ENCODE measurements at regions of chr10 and their contacts with region 1.

Region 1: GRCh38 chr10:87942884-87943527 is 79.6 kb downstream of the PTEN start:
- DNase-seq: no peak
- H3K4me3 ChIP-seq: no peak overlapping the region
- H3K27ac ChIP-seq: no peak overlapping the region
- H3K4me1 ChIP-seq: no peaks in the 10 kb centered on the region
- CTCF ChIP-seq: no peak

Region 2: GRCh38 chr10:87925570-87925969 is 17.4 kb before region 1 on chr10:
- CTCF ChIA-PET with region 1: interaction called, 3 read pairs
- POLR2A ChIA-PET with region 1: interaction called, 30 read pairs
- intact Hi-C with region 1: no loop called
- DNase-seq: no peak
- H3K4me3 ChIP-seq: no peak overlapping the region
- H3K27ac ChIP-seq: no peak overlapping the region
- H3K4me1 ChIP-seq: peaks cover 46% of the 10 kb centered on the region
- CTCF ChIP-seq: no peak

Region 3: GRCh38 chr10:87956055-87956454 is 13.0 kb after region 1 on chr10:
- CTCF ChIA-PET with region 1: no interaction called
- POLR2A ChIA-PET with region 1: interaction called, 13 read pairs
- intact Hi-C with region 1: no loop called
- DNase-seq: no peak
- H3K4me3 ChIP-seq: no peak overlapping the region
- H3K27ac ChIP-seq: no peak overlapping the region
- H3K4me1 ChIP-seq: no peaks in the 10 kb centered on the region
- CTCF ChIP-seq: no peak

Measured in OCI-LY7 (cell line).